Activated CD4-positive, alpha-beta T cell treated with anti-CD3 and anti-CD28 coated beads for 36 hours (primary cell): ENCODE measurements at regions of chr1 and their contacts with region 1.

Region 1: DNA sequence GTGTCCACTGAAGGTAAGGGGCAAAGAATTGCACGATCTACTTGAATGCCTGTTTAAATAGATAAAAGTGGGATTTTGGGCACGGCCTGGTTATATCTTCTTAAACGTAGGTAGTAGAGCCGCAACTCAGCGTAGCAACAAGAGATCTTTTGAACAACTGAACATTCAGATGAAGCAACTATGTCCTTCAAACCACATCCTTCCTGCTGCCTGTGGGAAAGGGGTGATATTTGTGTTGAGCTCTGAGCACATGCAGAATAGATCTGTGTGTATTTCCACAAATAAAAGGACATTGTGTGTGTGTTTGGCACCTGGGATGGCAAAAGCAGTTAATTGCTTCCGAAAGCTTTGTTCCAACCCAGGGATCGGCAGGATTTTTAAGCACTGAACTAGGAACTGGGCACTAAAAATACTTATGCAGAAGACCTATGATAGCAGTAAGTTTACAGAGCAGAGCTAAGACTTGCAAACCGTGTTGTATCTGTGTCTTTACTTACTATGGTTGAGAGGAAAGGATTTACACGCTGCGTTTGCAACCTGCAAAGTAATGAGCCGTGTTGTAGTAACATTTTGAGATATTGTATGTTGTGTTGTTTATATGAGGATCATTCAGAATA is 333.4 kb downstream of the CHRM3 start:
- DNase-seq: peak; percentile 68
- ATAC-seq: peak; percentile 47
- H3K4me3 Mint-ChIP-seq: no peak overlapping the region
- H3K27ac Mint-ChIP-seq: peak overlapping the region; percentile 99
- H3K4me1 Mint-ChIP-seq: peaks cover 36% of the 10 kb centered on the region
- H3K27me3 Mint-ChIP-seq: no peaks in the 10 kb centered on the region

Region 2: DNA sequence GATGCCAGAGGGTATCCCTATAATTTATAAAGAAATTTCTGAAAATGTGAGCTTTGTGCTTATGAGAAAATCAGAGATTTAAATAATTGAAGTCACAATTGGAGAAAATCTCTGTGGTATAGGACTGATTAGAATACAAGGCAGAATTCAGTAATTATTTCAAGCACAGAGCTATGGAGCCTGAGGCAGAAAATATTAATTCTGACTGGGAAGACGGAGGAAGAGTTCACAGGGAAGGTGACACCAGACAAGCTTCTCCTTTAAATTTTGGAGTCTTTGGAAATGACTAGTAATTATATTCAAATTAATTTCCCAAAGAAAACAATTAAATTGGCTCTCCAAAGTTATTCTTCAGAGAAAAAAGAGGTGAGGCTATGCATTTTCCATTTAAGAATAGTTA is 211.9 kb before region 1 on chr1:
- CTCF ChIA-PET with region 1: no interaction called
- POLR2A ChIA-PET with region 1: no interaction called
- intact Hi-C with region 1: loop called in 1 of 2 experiments (anchors 5 kb)
- DNase-seq: no peak
- ATAC-seq: no peak
- H3K4me3 Mint-ChIP-seq: no peak overlapping the region
- H3K27ac Mint-ChIP-seq: no peak overlapping the region
- H3K4me1 Mint-ChIP-seq: peaks cover 3% of the 10 kb centered on the region
- H3K27me3 Mint-ChIP-seq: no peaks in the 10 kb centered on the region

Region 3: DNA sequence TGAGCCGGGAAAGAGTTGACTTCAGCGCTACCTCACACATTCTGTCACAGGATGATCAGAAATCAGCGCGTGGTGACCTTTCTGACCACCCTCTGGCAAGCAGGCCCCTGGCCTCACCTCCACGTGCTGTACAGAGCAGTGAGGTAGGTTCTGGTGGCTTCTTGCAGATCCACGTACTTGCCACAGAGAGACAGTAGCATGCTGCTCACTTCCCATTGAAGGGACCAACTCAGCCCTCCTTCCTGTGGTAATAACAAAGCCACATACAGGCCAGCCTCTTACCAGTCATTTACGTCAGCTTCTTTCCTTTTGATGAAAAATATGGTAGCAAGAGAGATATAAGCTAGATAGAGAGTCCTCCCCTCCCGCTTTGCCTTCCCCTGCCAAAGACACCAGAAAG is 132.7 kb before region 1 on chr1:
- CTCF ChIA-PET with region 1: no interaction called
- POLR2A ChIA-PET with region 1: no interaction called
- intact Hi-C with region 1: loop called in 1 of 2 experiments (anchors 2 kb)
- DNase-seq: peak; percentile 39
- ATAC-seq: peak; percentile 97
- H3K4me3 Mint-ChIP-seq: no peak overlapping the region
- H3K27ac Mint-ChIP-seq: no peak overlapping the region
- H3K4me1 Mint-ChIP-seq: peaks cover 9% of the 10 kb centered on the region
- H3K27me3 Mint-ChIP-seq: no peaks in the 10 kb centered on the region

Region 4: GRCh38 chr1:239703075-239703474 is 16.7 kb before region 1 on chr1:
- CTCF ChIA-PET with region 1: interaction called, 3 read pairs
- POLR2A ChIA-PET with region 1: interaction called, 4 read pairs
- intact Hi-C with region 1: loop called in 1 of 2 experiments (anchors 2 kb)
- DNase-seq: no peak
- ATAC-seq: peak; percentile 51
- H3K4me3 Mint-ChIP-seq: no peak overlapping the region
- H3K27ac Mint-ChIP-seq: no peak overlapping the region
- H3K4me1 Mint-ChIP-seq: peaks cover 21% of the 10 kb centered on the region
- H3K27me3 Mint-ChIP-seq: no peaks in the 10 kb centered on the region

Region 5: DNA sequence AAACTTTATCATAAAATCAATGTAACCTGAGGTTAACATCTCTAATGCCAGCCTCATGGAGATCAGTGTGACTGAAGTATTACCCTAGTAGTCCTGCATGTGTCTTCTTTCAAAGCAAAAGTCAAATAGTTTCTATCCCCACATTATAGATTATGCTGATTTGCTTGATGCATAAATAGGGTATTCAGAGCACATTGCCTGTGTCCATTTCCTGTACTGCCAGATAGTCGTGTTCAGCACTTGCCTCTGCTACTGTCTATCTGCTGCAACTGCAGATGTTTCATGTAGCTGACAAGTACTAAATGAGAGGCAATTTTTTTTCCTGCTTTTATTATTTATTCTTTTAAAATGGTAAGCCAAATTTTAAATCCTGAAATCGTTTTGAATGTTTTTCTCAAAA is 15.4 kb after region 1 on chr1:
- CTCF ChIA-PET with region 1: no interaction called
- POLR2A ChIA-PET with region 1: no interaction called
- intact Hi-C with region 1: loop called in 1 of 2 experiments (anchors 2 kb)
- DNase-seq: no peak
- ATAC-seq: no peak
- H3K4me3 Mint-ChIP-seq: no peak overlapping the region
- H3K27ac Mint-ChIP-seq: no peak overlapping the region
- H3K4me1 Mint-ChIP-seq: peaks cover 22% of the 10 kb centered on the region
- H3K27me3 Mint-ChIP-seq: no peaks in the 10 kb centered on the region

Region 6: GRCh38 chr1:239778221-239778813 is 58.6 kb after region 1 on chr1:
- CTCF ChIA-PET with region 1: no interaction called
- POLR2A ChIA-PET with region 1: no interaction called
- intact Hi-C with region 1: no loop called
- DNase-seq: no peak
- ATAC-seq: no peak
- H3K4me3 Mint-ChIP-seq: no peak overlapping the region
- H3K27ac Mint-ChIP-seq: no peak overlapping the region
- H3K4me1 Mint-ChIP-seq: no peaks in the 10 kb centered on the region
- H3K27me3 Mint-ChIP-seq: no peaks in the 10 kb centered on the region

Region 7: DNA sequence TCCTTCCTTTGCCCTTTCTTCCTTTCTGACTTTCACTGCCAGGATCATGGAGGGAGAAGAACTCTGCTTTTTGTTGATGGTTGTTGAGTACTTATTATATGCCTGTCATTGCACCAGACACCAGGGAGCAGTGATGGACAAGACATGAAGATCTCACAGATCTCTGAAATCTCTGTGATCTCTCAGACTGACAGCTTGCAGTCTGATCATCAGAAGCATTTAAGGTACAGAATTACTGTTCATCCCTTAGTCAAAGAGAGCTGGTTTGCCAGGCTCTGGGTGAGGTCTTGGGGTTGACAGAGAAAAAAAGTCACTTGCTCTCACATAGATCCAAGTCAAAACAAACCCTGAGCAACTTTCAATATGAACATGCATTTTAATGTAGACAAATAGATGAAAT is 72.4 kb after region 1 on chr1:
- CTCF ChIA-PET with region 1: interaction called, 4 read pairs
- POLR2A ChIA-PET with region 1: no interaction called
- intact Hi-C with region 1: loop called (anchors 1 to 5 kb)
- DNase-seq: peak; percentile 51
- ATAC-seq: peak; percentile 99
- H3K4me3 Mint-ChIP-seq: no peak overlapping the region
- H3K27ac Mint-ChIP-seq: peak overlapping the region; percentile 22
- H3K4me1 Mint-ChIP-seq: peaks cover 20% of the 10 kb centered on the region
- H3K27me3 Mint-ChIP-seq: no peaks in the 10 kb centered on the region

Region 8: GRCh38 chr1:239814303-239814881 is 94.6 kb after region 1 on chr1:
- CTCF ChIA-PET with region 1: interaction called, 6 read pairs
- POLR2A ChIA-PET with region 1: interaction called, 6 read pairs
- intact Hi-C with region 1: loop called (anchors 1 kb)
- DNase-seq: peak; percentile 69
- ATAC-seq: peak; percentile 87
- H3K4me3 Mint-ChIP-seq: no peak overlapping the region
- H3K27ac Mint-ChIP-seq: peak overlapping the region; percentile 32
- H3K4me1 Mint-ChIP-seq: peaks cover 43% of the 10 kb centered on the region
- H3K27me3 Mint-ChIP-seq: no peaks in the 10 kb centered on the region